Activated CD4-positive, alpha-beta T cell treated with anti-CD3 and anti-CD28 coated beads for 36 hours (primary cell): ENCODE measurements at regions of chr6 and their contacts with region 1.

Region 1: DNA sequence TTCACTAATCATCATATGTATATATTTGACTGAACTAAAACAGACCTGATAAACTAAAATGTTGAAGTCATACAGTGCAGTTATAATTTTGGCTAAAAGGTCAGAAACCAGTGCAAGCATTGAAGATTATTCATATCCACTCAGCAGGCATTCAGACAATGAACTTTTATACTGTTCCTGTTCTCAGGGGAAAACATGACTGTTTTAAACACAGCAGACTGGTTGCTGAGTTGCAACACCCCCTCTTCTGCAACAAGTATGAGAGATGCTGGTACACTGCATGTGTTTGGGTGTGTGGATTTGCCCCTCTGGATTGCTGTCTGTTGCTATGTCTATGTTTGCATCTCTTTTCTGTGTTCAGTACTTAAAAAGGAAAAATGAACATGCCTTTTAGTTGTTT is 206.8 kb downstream of the EYA4 start:
- DNase-seq: no peak
- ATAC-seq: no peak
- H3K4me3 Mint-ChIP-seq: no peak overlapping the region
- H3K27ac Mint-ChIP-seq: no peak overlapping the region
- H3K4me1 Mint-ChIP-seq: no peaks in the 10 kb centered on the region
- H3K27me3 Mint-ChIP-seq: no peaks in the 10 kb centered on the region

Region 2: GRCh38 chr6:132354512-132355167 is 1093.3 kb before region 1 on chr6:
- CTCF ChIA-PET with region 1: no interaction called
- POLR2A ChIA-PET with region 1: interaction called, 10 read pairs
- intact Hi-C with region 1: no loop called
- DNase-seq: peak; percentile 59
- ATAC-seq: peak; percentile 72
- H3K4me3 Mint-ChIP-seq: no peak overlapping the region
- H3K27ac Mint-ChIP-seq: no peak overlapping the region
- H3K4me1 Mint-ChIP-seq: peaks cover 15% of the 10 kb centered on the region
- H3K27me3 Mint-ChIP-seq: peaks cover 9% of the 10 kb centered on the region

Region 3: GRCh38 chr6:132683543-132683942 is 764.4 kb before region 1 on chr6:
- CTCF ChIA-PET with region 1: no interaction called
- POLR2A ChIA-PET with region 1: no interaction called
- intact Hi-C with region 1: no loop called
- DNase-seq: no peak
- ATAC-seq: no peak
- H3K4me3 Mint-ChIP-seq: no peak overlapping the region
- H3K27ac Mint-ChIP-seq: no peak overlapping the region
- H3K4me1 Mint-ChIP-seq: peaks cover 2% of the 10 kb centered on the region
- H3K27me3 Mint-ChIP-seq: peaks cover 15% of the 10 kb centered on the region

Region 4: GRCh38 chr6:134707342-134708031 is 1259.6 kb after region 1 on chr6:
- CTCF ChIA-PET with region 1: no interaction called
- POLR2A ChIA-PET with region 1: no interaction called
- intact Hi-C with region 1: no loop called
- DNase-seq: no peak
- ATAC-seq: no peak
- H3K4me3 Mint-ChIP-seq: no peak overlapping the region
- H3K27ac Mint-ChIP-seq: no peak overlapping the region
- H3K4me1 Mint-ChIP-seq: no peaks in the 10 kb centered on the region
- H3K27me3 Mint-ChIP-seq: peaks cover 15% of the 10 kb centered on the region